ENCODE measurements at regions of chr7 and their contacts with region 1.

Region 1: GRCh38 chr7:79912213-79912633 is 222.4 kb upstream of the GNAI1 start:
- DNase-seq: no peak
- H3K4me3 ChIP-seq: no peak overlapping the region
- H3K4me3 Mint-ChIP-seq: no peak overlapping the region
- H3K27ac Mint-ChIP-seq: no peak overlapping the region
- H3K4me1 ChIP-seq: no peaks in the 10 kb centered on the region
- H3K4me1 Mint-ChIP-seq: no peaks in the 10 kb centered on the region
- H3K27me3 ChIP-seq: no peaks in the 10 kb centered on the region
- H3K27me3 Mint-ChIP-seq: peaks cover 9% of the 10 kb centered on the region
- CTCF ChIP-seq: no peak

Region 2: DNA sequence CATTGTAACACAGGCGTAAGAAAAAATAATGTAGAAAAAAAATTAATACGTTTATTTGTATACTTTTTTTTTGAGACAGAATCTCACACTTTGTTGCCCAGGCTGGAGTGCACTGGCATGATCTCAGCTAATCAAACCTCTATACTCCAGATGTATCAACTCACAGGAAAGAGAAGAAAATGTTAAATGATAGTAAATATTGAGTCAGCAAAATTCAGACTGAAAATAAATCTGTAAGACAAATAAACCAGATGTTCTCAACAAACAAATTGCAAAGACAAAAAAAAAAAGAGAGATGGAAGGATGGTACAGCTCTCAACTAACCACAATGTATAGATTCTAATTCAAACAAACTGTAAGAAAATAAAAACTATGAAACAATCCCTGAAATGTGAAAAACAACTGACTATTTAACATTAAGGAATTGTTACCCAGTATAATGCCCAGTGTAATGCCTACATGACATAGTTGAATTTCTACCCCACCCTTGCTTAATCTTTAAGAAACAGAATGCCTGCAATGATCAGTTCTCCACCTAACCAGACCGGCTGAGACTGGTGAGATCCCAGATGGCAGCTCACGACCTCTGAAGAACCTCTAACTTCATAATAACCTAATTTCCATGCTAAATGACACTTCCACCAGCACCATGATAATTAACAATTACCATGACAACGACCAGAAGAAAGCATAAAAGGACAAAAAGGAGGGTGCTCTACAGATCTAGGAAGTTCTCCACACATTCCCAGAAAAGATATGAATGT is 49.6 kb before region 1 on chr7:
- CTCF ChIA-PET with region 1: no interaction called
- POLR2A ChIA-PET with region 1: no interaction called
- intact Hi-C with region 1: loop called (anchors 1 kb)
- DNase-seq: no peak
- H3K4me3 ChIP-seq: no peak overlapping the region
- H3K4me3 Mint-ChIP-seq: no peak overlapping the region
- H3K27ac Mint-ChIP-seq: no peak overlapping the region
- H3K4me1 ChIP-seq: no peaks in the 10 kb centered on the region
- H3K4me1 Mint-ChIP-seq: no peaks in the 10 kb centered on the region
- H3K27me3 ChIP-seq: no peaks in the 10 kb centered on the region
- H3K27me3 Mint-ChIP-seq: no peaks in the 10 kb centered on the region
- CTCF ChIP-seq: no peak